ENCODE measurements at regions of chr16 and their contacts with region 1.

Region 1: GRCh38 chr16:2023098-2023925 is 3.4 kb upstream of the NHERF2 start:
- DNase-seq: peak; percentile 71 to 100
- H3K4me3 ChIP-seq: peak overlapping the region; percentile 21 to 59 (median 32); a peak in 6 of 8 replicates
- H3K27ac ChIP-seq: no peak overlapping the region
- H3K4me1 ChIP-seq: peaks cover 0 to 27% (median 13%) of the 10 kb centered on the region in 4 experiments; a peak in 5 of 7 replicates
- H3K27me3 ChIP-seq: peaks cover 22 to 59% (median 52%) of the 10 kb centered on the region in 4 experiments
- CTCF ChIP-seq: peak in 2 of 3 experiments; percentile 92 to 99; a peak in 3 of 4 replicates
- EP300 ChIP-seq: no peak
- POLR2A ChIP-seq: no peak
- RAD21 ChIP-seq: peak; percentile 92 to 93

Region 2: DNA sequence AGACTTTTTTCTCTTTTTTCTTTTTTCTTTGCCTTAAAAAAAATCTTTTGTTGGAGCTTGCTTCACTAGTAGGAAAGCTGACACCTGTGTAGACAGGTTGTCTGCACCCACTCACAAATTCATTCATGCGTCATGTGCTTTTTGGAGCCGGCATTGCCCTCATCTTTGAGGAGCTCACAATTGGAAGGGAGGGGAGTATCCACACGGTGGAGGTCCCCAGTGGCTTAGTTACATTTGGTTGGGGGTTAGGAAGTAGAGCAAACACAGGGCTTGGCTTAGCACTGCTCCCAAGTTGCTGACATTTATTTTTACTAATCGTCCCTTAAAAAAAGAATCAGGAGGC is 132.6 kb before region 1 on chr16:
- CTCF ChIA-PET with region 1: no interaction called
- POLR2A ChIA-PET with region 1: no interaction called
- DNase-seq: no peak
- H3K4me3 ChIP-seq: no peak overlapping the region
- H3K27ac ChIP-seq: no peak overlapping the region
- H3K4me1 ChIP-seq: no peaks in the 10 kb centered on the region
- H3K27me3 ChIP-seq: 0 out of 7 replicates have a peak, but pooled peaks cover 0 to 3% (median 0%) of the 10 kb centered on the region in 4 experiments
- CTCF ChIP-seq: no peak
- EP300 ChIP-seq: no peak
- POLR2A ChIP-seq: no peak
- RAD21 ChIP-seq: no peak

Region 3: GRCh38 chr16:2047330-2048115 is 24.2 kb after region 1 on chr16 and contains the starts of genes NTHL1 and TSC2:
- CTCF ChIA-PET with region 1: interaction called, 32 read pairs
- POLR2A ChIA-PET with region 1: interaction called, 5 read pairs
- DNase-seq: peak; percentile 90 to 97
- H3K4me3 ChIP-seq: peak within 1 kb of the TSS; percentile 42 to 89 (median 86)
- H3K27ac ChIP-seq: no peak within 1 kb of the TSS
- H3K4me1 ChIP-seq: peaks cover 0 to 3% (median 1%) of the 10 kb centered on the region in 4 experiments; a peak in 3 of 7 replicates
- H3K27me3 ChIP-seq: no peaks in the 10 kb centered on the region; a peak in 1 of 7 replicates
- CTCF ChIP-seq: peak in 1 of 3 experiments; percentile 15; a peak in 1 of 4 replicates
- EP300 ChIP-seq: no peak
- POLR2A ChIP-seq: no peak
- RAD21 ChIP-seq: no peak; a peak in 1 of 4 replicates
- total RNA-seq, gene NTHL1: 70.9 and 84.5 TPM in 2 replicates
- total RNA-seq, gene TSC2: 91.1 and 96.6 TPM in 2 replicates

Region 4: DNA sequence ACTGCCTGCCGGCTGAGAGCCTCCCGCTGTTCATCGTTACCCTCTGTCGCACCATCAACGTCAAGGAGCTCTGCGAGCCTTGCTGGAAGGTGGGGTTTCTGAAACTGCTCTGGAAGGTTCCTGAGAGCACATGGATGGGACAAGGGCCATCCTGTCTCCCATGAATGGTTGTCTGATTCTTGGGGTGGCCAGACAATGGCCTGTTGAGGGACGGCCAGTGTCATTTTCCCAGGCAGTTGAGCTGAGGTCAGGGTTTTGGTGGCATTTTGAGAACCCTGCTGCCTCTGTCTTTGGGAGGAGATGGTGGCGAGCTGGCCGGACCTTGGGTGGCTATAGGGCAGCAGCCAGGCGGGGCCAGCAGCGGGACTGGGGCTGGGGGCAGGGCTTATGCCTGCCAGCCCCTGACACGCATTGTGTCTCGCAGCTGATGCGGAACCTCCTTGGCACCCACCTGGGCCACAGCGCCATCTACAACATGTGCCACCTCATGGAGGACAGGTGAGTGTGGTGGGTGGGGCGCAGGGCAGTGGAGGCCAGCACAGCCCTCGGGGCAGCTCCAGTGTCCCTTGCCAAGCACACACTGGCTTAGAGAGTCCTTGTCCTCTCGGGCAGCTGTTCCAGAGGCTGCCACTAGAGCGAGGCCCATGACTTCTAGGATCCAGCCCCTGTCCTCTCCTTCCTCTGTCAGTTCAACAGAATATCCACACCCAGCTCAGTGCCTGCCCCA is 33.5 kb after region 1 on chr16:
- CTCF ChIA-PET with region 1: interaction called, 22 read pairs
- POLR2A ChIA-PET with region 1: interaction called, 3 read pairs
- DNase-seq: no peak
- H3K4me3 ChIP-seq: no peak overlapping the region
- H3K27ac ChIP-seq: no peak overlapping the region; the same call in 1 of the 2 replicates
- H3K4me1 ChIP-seq: no peaks in the 10 kb centered on the region
- H3K27me3 ChIP-seq: no peaks in the 10 kb centered on the region
- CTCF ChIP-seq: peak in 2 of 3 experiments; percentile 43 to 53; a peak in 3 of 4 replicates
- EP300 ChIP-seq: no peak
- POLR2A ChIP-seq: no peak
- RAD21 ChIP-seq: peak; percentile 15 to 17; a peak in 2 of 4 replicates

Region 5: GRCh38 chr16:2082160-2082982 is 59.1 kb after region 1 on chr16:
- CTCF ChIA-PET with region 1: interaction called, 15 read pairs
- POLR2A ChIA-PET with region 1: no interaction called
- DNase-seq: no peak
- H3K4me3 ChIP-seq: no peak overlapping the region
- H3K27ac ChIP-seq: no peak overlapping the region
- H3K4me1 ChIP-seq: no peaks in the 10 kb centered on the region
- H3K27me3 ChIP-seq: no peaks in the 10 kb centered on the region
- CTCF ChIP-seq: no peak
- EP300 ChIP-seq: no peak
- POLR2A ChIP-seq: no peak
- RAD21 ChIP-seq: no peak

Region 6: GRCh38 chr16:2147981-2148671 is 124.8 kb after region 1 on chr16 and contains the start of gene RAB26:
- CTCF ChIA-PET with region 1: interaction called, 15 read pairs
- POLR2A ChIA-PET with region 1: interaction called, 14 read pairs
- DNase-seq: peak in 1 of 2 experiments; percentile 90
- H3K4me3 ChIP-seq: peak within 1 kb of the TSS; percentile 37 to 85 (median 48)
- H3K27ac ChIP-seq: no peak within 1 kb of the TSS
- H3K4me1 ChIP-seq: peaks cover 3 to 36% (median 27%) of the 10 kb centered on the region in 4 experiments
- H3K27me3 ChIP-seq: peaks cover 0 to 11% (median 5%) of the 10 kb centered on the region in 4 experiments; a peak in 3 of 7 replicates
- CTCF ChIP-seq: no peak
- EP300 ChIP-seq: no peak
- POLR2A ChIP-seq: no peak
- RAD21 ChIP-seq: no peak; a peak in 1 of 4 replicates
- total RNA-seq, gene RAB26: 4.3 and 5.3 TPM in 2 replicates